Breast epithelium (tissue), 4 donors: ENCODE measurements at regions of chr4 and their contacts with region 1.

Region 1: DNA sequence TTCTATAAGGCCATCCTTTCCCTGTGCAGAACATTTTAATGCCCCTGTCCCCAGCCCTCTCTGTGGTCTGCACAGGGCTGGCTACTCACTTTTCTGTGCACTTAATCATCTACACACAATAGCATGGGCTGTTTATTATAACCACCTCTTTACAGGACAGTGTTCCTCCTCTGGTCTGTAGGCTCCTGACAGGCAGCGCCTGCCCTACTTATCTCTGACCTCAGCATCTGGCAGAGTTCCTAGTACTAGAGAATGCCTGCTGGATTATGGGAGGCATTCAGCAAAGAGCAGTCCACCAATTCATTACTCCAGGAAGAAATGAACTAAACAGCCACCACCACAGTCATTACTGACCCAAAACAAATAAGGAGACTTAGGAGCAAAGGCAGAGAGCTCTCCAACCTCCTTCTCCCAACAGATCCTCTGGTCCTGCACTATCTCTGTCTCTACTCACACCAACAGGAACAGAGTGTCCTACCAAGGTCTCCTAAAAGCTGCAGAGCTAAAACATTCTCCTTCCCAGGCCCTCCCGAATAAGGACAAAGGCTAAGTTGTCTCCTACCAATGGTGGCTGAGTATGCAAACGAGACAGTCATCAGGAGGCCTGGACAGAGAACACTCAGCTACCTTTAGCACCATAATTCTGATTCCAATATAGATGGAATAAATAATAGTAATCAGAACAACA is 279.2 kb downstream of the QDPR start:
- DNase-seq: no peak
- H3K4me3 ChIP-seq: no peak overlapping the region
- H3K27ac ChIP-seq: no peak overlapping the region
- H3K4me1 ChIP-seq: no peaks in the 10 kb centered on the region
- H3K27me3 ChIP-seq: no peaks in the 10 kb centered on the region
- CTCF ChIP-seq: no peak
- POLR2A ChIP-seq: no peak

Region 2: DNA sequence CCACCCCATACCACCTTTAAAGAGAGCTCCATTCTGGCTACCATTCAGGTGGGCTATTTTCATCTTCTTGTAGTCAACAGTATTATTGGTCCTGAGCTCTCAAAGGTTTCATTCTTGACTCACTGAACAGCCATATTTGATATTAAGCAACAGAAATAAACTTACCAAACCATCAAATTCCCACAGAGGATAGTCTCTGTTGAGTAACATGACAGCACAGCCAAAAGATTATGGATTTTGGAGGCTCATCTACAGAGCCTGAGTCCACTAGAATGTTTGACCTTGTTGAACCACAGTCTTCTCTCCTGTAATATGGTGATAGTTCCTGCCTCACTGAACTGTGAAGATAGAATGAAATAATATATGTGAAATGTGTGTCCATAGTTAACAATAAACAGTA is 58.0 kb before region 1 on chr4:
- intact Hi-C with region 1: loop called (anchors 5 kb)
- DNase-seq: no peak
- H3K4me3 ChIP-seq: no peak overlapping the region
- H3K27ac ChIP-seq: no peak overlapping the region
- H3K4me1 ChIP-seq: no peaks in the 10 kb centered on the region
- H3K27me3 ChIP-seq: no peaks in the 10 kb centered on the region
- CTCF ChIP-seq: no peak
- POLR2A ChIP-seq: no peak

Region 3: DNA sequence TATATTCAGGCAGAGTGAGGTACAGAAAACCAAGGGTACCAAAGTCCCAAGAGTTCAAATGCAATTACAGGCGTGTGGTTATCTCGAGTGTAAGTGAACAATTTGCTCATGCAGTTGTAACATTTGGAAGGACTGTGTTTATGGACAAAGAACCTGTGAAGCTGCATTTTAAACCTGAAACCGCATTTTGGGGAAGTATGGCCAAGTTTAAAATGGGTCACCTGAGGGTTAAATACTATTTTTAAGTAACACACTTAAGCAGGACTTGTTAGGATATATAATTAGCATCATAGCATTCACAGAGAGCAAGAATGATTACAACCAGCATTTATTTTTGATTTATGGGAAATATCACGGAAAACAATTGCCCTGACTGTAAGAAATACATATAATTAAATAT is 867.9 kb after region 1 on chr4:
- intact Hi-C with region 1: no loop called
- DNase-seq: no peak
- H3K4me3 ChIP-seq: no peak overlapping the region
- H3K27ac ChIP-seq: no peak overlapping the region
- H3K4me1 ChIP-seq: no peaks in the 10 kb centered on the region
- H3K27me3 ChIP-seq: no peaks in the 10 kb centered on the region
- CTCF ChIP-seq: no peak
- POLR2A ChIP-seq: no peak